Mammary epithelial cell (primary cell): ENCODE measurements at regions of chr15 and their contacts with region 1.

Region 1: DNA sequence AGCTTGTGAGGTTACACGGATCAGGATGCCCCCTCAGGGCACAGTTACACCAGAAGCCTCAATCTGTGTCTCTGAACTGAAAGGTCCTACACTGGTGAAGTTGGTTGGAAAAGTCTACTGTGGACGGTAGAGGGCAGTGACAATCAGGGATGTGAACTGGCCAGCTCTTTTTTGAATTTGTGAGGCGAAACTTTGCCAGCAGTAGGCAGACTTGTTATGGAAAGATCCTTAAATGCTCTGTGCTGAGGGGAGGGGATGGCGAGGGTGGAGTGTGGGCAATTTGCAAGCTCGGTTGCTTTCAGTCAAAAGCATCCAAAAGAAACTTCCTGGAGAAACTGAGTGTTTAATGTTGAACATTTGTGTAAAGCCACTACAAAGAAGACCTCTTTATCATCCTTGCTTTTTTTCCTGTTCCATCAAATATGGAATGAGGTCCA is 127.4 kb upstream of the ABHD17C start:
- DNase-seq: peak; percentile 68
- H3K4me3 ChIP-seq: no peak overlapping the region
- H3K27ac ChIP-seq: no peak overlapping the region
- H3K4me1 ChIP-seq: no peaks in the 10 kb centered on the region
- H3K27me3 ChIP-seq: no peaks in the 10 kb centered on the region
- CTCF ChIP-seq: peak; percentile 83 to 94

Region 2: DNA sequence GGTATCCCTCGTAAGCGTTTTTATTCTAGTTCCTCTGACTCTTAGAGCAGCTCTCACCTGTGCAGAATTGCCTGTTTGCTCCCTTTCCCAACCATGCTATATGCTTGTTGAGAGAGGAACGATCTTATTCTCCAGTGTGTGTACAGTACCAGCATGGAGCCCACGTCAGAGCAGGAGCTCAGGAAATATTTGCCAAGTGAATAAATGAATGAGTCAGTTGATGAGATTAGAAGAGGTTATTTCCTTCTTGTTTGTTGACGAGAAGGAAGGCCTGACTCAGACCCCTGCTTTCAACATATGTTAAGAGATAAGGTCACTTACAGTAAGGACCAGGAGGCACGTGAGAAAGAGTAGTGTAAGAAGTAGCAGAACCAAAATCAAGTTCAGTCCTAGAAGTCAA is 21.1 kb after region 1 on chr15:
- CTCF ChIA-PET with region 1: no interaction called
- dilution Hi-C with region 1: no loop called
- in situ Hi-C with region 1: no loop called
- intact Hi-C with region 1: no loop called
- DNase-seq: peak; percentile 95
- H3K4me3 ChIP-seq: no peak overlapping the region
- H3K27ac ChIP-seq: peak overlapping the region; percentile 43
- H3K4me1 ChIP-seq: peaks cover 43% of the 10 kb centered on the region
- H3K27me3 ChIP-seq: no peaks in the 10 kb centered on the region
- CTCF ChIP-seq: no peak

Region 3: GRCh38 chr15:80619680-80620079 is 51.9 kb after region 1 on chr15:
- CTCF ChIA-PET with region 1: no interaction called
- dilution Hi-C with region 1: no loop called
- in situ Hi-C with region 1: no loop called
- intact Hi-C with region 1: loop called (anchors 1 kb)
- DNase-seq: peak; percentile 24
- H3K4me3 ChIP-seq: no peak overlapping the region
- H3K27ac ChIP-seq: no peak overlapping the region
- H3K4me1 ChIP-seq: peaks cover 12% of the 10 kb centered on the region
- H3K27me3 ChIP-seq: no peaks in the 10 kb centered on the region
- CTCF ChIP-seq: peak in 1 of 2 donors; percentile 41

Region 4: GRCh38 chr15:80660122-80660521 is 92.4 kb after region 1 on chr15:
- CTCF ChIA-PET with region 1: interaction called, 3 read pairs
- dilution Hi-C with region 1: no loop called
- in situ Hi-C with region 1: no loop called
- intact Hi-C with region 1: loop called (anchors 1 kb)
- DNase-seq: no peak
- H3K4me3 ChIP-seq: no peak overlapping the region
- H3K27ac ChIP-seq: no peak overlapping the region
- H3K4me1 ChIP-seq: peaks cover 27% of the 10 kb centered on the region
- H3K27me3 ChIP-seq: no peaks in the 10 kb centered on the region
- CTCF ChIP-seq: peak; percentile 33 to 54

Region 5: GRCh38 chr15:80970018-80970658 is 402.4 kb after region 1 on chr15:
- CTCF ChIA-PET with region 1: interaction called, 5 read pairs
- dilution Hi-C with region 1: loop called (anchors 5 kb)
- in situ Hi-C with region 1: loop called (anchors 5 to 10 kb)
- intact Hi-C with region 1: loop called (anchors 1 kb)
- DNase-seq: peak; percentile 37
- H3K4me3 ChIP-seq: no peak overlapping the region
- H3K27ac ChIP-seq: no peak overlapping the region
- H3K4me1 ChIP-seq: no peaks in the 10 kb centered on the region
- H3K27me3 ChIP-seq: no peaks in the 10 kb centered on the region
- CTCF ChIP-seq: peak; percentile 57 to 79